ENCODE measurements at regions of chr6 and their contacts with region 1.

Region 1: DNA sequence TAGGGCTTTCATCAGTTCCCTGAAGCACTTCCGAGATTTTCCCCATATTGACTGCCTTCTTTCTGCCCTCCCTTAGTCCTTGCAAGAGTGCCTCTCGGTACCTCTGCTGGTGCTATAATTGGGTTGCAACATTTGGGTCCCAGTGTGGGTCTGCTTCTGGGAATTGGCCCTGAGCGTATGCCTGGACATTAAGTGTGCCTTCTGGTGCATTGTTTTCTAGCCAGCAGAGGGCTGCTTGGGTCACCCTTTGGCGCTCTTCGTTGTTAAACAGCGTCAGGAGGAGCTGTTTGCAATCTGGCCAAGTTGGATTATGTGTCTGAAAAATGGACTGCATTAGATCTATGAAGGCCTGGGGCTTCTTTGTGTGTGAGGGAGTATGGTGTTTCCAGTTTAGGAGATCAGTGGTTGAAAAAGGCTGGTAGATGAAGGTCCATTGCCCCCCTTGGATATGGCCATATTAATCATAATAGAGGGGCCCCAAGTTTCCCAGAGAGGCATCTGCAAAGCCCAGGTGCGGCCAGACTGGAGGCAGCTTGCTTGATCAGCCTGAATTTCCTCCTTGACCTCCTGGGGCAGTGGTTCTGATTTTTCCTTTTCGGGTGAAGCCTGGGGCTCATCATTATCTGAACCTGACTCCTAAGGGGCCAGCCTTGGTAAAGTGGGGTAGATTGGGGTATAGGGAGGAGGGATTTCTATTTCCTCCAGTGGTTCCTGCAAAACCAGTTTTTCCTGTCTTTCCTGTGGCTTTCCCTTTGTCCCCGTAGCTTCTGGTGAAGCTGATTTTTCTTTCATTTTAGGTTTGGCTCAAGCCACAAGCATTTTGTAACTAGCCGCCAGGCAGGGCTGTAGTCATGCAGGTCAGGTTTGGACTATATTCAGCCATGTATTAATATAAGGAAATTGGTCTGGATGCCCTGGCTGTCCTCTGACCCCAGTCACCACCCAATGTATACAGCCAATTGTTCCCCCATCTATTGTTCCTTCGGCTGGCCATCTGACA is 85.4 kb upstream of the GPR6 start:
- DNase-seq: no peak
- H3K4me3 ChIP-seq: no peak overlapping the region
- CTCF ChIP-seq: no peak
- POLR2A ChIP-seq: no peak

Region 2: GRCh38 chr6:109861946-109862345 is 30.8 kb before region 1 on chr6:
- intact Hi-C with region 1: loop called (anchors 2 kb)
- DNase-seq: no peak
- H3K4me3 ChIP-seq: no peak overlapping the region
- CTCF ChIP-seq: no peak
- POLR2A ChIP-seq: no peak